HEK293 (cell line): ENCODE measurements at regions of chr9 and their contacts with region 1.

Region 1: GRCh38 chr9:124410321-124410913 is 4.8 kb downstream of the PSMB7 start:
- H3K4me3 ChIP-seq: no peak overlapping the region
- H3K27ac ChIP-seq: no peak overlapping the region
- H3K4me1 ChIP-seq: peaks cover 4% of the 10 kb centered on the region; the same call in 1 of the 2 replicates
- CTCF ChIP-seq: no peak

Region 2: DNA sequence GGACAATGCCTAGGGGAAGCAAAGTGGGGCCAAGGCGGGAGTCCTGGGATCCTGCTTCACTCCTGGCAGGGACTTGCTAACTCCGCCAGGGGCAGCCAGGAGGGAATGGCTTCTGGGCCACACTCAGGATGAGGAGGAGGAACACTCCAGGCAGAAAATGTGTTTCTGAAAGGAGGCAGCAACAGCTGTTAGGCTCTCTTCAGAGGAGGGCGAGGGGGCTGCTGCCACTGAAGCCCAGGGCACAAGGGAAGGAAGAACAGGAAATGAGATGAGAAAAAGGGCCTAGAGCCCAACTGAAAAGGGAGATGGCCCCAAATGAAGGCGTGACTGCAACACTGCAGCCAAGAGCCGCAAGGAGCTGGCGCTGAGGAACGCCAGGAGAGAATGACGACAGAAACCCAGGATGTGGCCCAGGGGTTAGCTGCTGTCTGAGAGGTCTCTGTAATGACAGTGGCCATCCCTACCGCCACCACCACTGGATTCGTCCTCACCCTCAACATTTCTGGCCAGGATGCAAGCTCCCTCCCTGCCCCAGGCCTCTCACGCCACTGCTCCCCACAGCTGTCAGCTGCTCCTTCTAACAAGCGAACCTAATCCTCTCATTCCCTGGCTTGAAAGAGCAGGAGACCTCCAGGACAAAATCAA is 11.0 kb before region 1 on chr9:
- CTCF ChIA-PET with region 1: interaction called, 17 read pairs
- POLR2A ChIA-PET with region 1: no interaction called
- H3K4me3 ChIP-seq: no peak overlapping the region
- H3K27ac ChIP-seq: no peak overlapping the region
- H3K4me1 ChIP-seq: no peaks in the 10 kb centered on the region
- CTCF ChIP-seq: no peak